Right lobe of liver (tissue), 6 donors: ENCODE measurements at regions of chr16 and their contacts with region 1.

Region 1: DNA sequence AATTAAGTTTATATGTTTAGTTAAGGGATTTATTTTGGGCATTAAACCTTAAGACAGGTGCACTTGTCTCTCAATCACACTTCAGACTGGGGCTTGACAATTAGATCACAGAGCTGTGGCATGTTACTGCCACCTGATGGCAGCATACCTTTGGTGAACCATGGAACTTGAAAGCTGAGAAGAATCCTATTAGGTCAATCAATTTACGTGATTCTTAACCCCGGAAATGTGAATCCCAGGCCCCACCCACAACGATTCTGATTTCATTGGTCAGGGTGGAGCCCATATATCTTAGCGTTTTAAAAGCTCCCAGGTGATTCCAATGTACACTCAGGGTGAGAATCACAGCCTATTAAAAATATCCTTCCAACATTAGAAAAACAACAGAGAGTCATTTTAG is 91.0 kb downstream of the GSG1L start:
- DNase-seq: peak in 1 of 3 donors; percentile 37
- ATAC-seq: peak; percentile 63 to 88 (median 84)
- H3K4me3 ChIP-seq: no peak overlapping the region
- H3K27ac ChIP-seq: no peak overlapping the region
- H3K4me1 ChIP-seq: no peaks in the 10 kb centered on the region
- H3K27me3 ChIP-seq: no peaks in the 10 kb centered on the region
- CTCF ChIP-seq: peak; percentile 44 to 69 (median 64)
- POLR2A ChIP-seq: no peak

Region 2: DNA sequence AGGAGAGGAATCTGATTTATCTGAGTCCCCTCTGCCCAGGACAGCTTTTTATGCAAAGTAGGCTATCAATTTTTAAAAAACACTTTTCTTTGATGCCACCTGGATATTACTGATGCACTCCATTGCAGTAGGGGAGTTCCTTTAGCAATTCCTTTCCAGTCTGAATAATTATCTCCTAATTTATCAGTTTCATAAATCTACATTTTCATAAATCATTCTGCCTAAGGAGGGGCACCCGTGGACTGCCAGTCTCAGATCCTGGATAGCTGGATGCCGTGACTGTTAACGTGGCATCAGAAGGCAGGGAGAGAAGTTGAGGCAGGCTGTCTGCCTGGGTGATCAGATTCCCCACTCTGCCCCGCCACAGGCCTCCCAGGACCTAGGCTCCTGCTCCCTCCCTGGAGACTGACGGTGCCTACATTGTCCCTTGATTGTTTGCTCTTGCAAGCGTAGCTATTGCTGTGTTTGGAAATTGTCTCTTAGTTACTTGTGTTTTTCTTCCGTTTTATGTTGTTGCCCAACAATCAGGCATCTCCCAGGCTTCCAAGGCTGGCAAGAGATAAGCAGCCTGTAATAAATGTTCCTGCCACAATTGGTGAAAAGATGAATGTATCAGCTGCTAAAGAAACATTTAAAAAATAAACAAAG is 347.3 kb before region 1 on chr16:
- intact Hi-C with region 1: no loop called
- DNase-seq: peak in 1 of 3 donors; percentile 37
- ATAC-seq: peak; percentile 57 to 88 (median 78)
- H3K4me3 ChIP-seq: no peak overlapping the region
- H3K27ac ChIP-seq: peak overlapping the region in 1 of 3 donors; percentile 21
- H3K4me1 ChIP-seq: peaks cover 0 to 13% (median 0%) of the 10 kb centered on the region in 4 donors
- H3K27me3 ChIP-seq: no peaks in the 10 kb centered on the region
- CTCF ChIP-seq: no peak
- POLR2A ChIP-seq: no peak

Region 3: DNA sequence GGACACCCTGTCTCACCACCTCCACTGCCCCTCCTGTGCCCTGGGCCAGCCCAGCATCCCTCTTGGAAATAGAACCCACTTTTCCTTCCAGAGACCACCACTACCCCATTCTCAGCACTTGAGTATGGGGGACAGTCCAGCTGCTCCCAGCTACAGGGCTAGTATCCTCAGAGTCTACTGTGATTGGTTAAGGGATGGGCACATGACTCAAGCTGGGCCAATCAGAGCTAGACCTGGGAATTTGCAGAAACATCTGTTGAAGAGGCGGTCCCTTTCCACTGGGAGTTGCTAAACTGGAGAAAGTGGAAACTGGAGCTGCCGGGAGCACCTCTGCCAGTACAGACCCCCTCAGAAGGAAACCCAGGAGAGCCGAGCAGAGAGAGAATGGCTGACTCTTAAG is 65.6 kb before region 1 on chr16:
- intact Hi-C with region 1: no loop called
- DNase-seq: no peak
- ATAC-seq: no peak
- H3K4me3 ChIP-seq: no peak overlapping the region
- H3K27ac ChIP-seq: no peak overlapping the region
- H3K4me1 ChIP-seq: no peaks in the 10 kb centered on the region
- H3K27me3 ChIP-seq: no peaks in the 10 kb centered on the region
- CTCF ChIP-seq: no peak
- POLR2A ChIP-seq: no peak

Region 4: DNA sequence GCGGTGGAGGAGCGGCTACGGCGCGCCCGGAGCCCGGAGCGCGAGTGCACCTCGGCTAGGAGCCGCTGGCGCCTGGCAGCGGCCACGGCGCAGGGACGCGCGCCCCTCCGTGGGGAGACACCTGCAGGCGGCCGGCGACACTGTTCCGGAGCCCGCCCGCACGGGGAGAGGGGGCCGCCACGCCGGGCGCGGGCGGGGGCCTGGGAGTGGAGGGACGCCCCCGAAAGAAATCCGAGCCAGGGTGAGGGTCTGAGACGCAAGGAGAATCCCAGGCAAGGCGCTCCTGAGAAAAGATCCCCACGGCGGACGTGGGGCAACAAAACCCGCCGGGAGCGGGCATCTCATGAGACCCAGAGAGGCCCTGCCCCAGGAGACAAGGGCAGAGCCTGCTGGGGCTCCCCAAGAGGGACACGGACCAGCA is 91.2 kb after region 1 on chr16 and contains the start of gene GSG1L:
- intact Hi-C with region 1: loop called (anchors 10 kb)
- DNase-seq: no peak
- ATAC-seq: no peak
- H3K4me3 ChIP-seq: peak within 1 kb of the TSS in 1 of 3 donors; percentile 26
- H3K27ac ChIP-seq: no peak within 1 kb of the TSS
- H3K4me1 ChIP-seq: no peaks in the 10 kb centered on the region
- H3K27me3 ChIP-seq: peaks cover 0 to 12% of the 10 kb centered on the region in 2 donors
- CTCF ChIP-seq: no peak
- POLR2A ChIP-seq: no peak
- total RNA-seq, gene GSG1L: 0.33 TPM in 1 of 6 experiments, not detected in the others